CD4-positive, alpha-beta memory T cell (primary cell): ENCODE measurements at regions of chr7 and their contacts with region 1.

Region 1: GRCh38 chr7:101287032-101287431 is 34.6 kb downstream of the IFT22 start:
- DNase-seq: no peak
- H3K4me3 ChIP-seq: no peak overlapping the region
- H3K4me3 Mint-ChIP-seq: no peak overlapping the region
- H3K27ac ChIP-seq: no peak overlapping the region
- H3K27ac Mint-ChIP-seq: peak overlapping the region in 1 of 7 donors; percentile 83
- H3K4me1 ChIP-seq: peaks cover 9% of the 10 kb centered on the region
- H3K4me1 Mint-ChIP-seq: peaks cover 8 to 25% (median 19%) of the 10 kb centered on the region in 4 donors
- H3K27me3 ChIP-seq: no peaks in the 10 kb centered on the region
- H3K27me3 Mint-ChIP-seq: peaks cover 6 to 9% of the 10 kb centered on the region in 2 donors

Region 2: GRCh38 chr7:101162551-101163278 is 124.3 kb before region 1 on chr7:
- CTCF ChIA-PET with region 1: no interaction called
- POLR2A ChIA-PET with region 1: no interaction called
- intact Hi-C with region 1: no loop called
- DNase-seq: no peak
- H3K4me3 ChIP-seq: no peak overlapping the region
- H3K4me3 Mint-ChIP-seq: peak overlapping the region; percentile 46 to 79 (median 63)
- H3K27ac ChIP-seq: no peak overlapping the region
- H3K27ac Mint-ChIP-seq: no peak overlapping the region
- H3K4me1 ChIP-seq: peaks cover 39% of the 10 kb centered on the region
- H3K4me1 Mint-ChIP-seq: peaks cover 11 to 29% (median 19%) of the 10 kb centered on the region in 4 donors
- H3K27me3 ChIP-seq: peaks cover 36% of the 10 kb centered on the region
- H3K27me3 Mint-ChIP-seq: peaks cover 27 to 28% of the 10 kb centered on the region in 2 donors

Region 3: DNA sequence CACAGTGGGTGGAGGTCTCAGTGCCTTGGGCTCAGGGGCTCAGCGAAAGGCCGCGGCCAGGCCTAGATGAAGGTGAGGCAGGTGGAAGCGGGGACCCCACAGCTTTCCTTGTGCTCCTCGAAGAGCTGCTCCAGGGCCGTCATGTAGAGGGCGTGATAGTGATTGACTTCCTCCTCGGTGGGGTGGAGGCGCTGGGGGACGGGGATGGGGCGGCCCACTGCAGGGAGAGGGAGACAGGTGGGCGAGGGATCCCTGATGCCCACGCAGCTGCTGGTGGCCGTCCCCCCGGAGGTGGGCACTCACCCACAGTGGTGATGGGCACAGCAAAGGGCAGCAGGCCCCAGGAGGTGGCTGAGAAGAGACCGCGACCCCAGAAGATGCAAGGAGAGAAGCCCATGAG is 91.1 kb before region 1 on chr7:
- CTCF ChIA-PET with region 1: interaction called, 62 read pairs
- POLR2A ChIA-PET with region 1: no interaction called
- intact Hi-C with region 1: loop called (anchors 1 kb)
- DNase-seq: no peak
- H3K4me3 ChIP-seq: no peak overlapping the region
- H3K4me3 Mint-ChIP-seq: no peak overlapping the region
- H3K27ac ChIP-seq: no peak overlapping the region
- H3K27ac Mint-ChIP-seq: no peak overlapping the region
- H3K4me1 ChIP-seq: peaks cover 2% of the 10 kb centered on the region
- H3K4me1 Mint-ChIP-seq: peaks cover under 1 to 8% (median 4%) of the 10 kb centered on the region in 4 donors
- H3K27me3 ChIP-seq: no peaks in the 10 kb centered on the region
- H3K27me3 Mint-ChIP-seq: peaks cover 7 to 14% of the 10 kb centered on the region in 2 donors

Region 4: GRCh38 chr7:101244375-101245146 is 42.5 kb before region 1 on chr7 and contains the start of gene FIS1:
- CTCF ChIA-PET with region 1: interaction called, 24 read pairs
- POLR2A ChIA-PET with region 1: interaction called, 6 read pairs
- intact Hi-C with region 1: loop called (anchors 2 kb)
- DNase-seq: peak; percentile 91 to 96 (median 93)
- H3K4me3 ChIP-seq: peak within 1 kb of the TSS; percentile 95 to 100
- H3K4me3 Mint-ChIP-seq: peak within 1 kb of the TSS; percentile 93 to 99 (median 97)
- H3K27ac ChIP-seq: peak within 1 kb of the TSS; percentile 85
- H3K27ac Mint-ChIP-seq: peak within 1 kb of the TSS; percentile 93 to 99 (median 97)
- H3K4me1 ChIP-seq: peaks cover 24% of the 10 kb centered on the region
- H3K4me1 Mint-ChIP-seq: peaks cover 14 to 50% (median 24%) of the 10 kb centered on the region in 4 donors
- H3K27me3 ChIP-seq: no peaks in the 10 kb centered on the region
- H3K27me3 Mint-ChIP-seq: no peaks in the 10 kb centered on the region
- total RNA-seq, gene FIS1: 100 to 104 TPM

Region 5: GRCh38 chr7:101308245-101309085 is 21.4 kb after region 1 on chr7:
- CTCF ChIA-PET with region 1: interaction called, 10 read pairs
- POLR2A ChIA-PET with region 1: no interaction called
- intact Hi-C with region 1: no loop called
- DNase-seq: peak in 2 of 5 donors; percentile 9 to 10
- H3K4me3 ChIP-seq: peak overlapping the region; percentile 6 to 19
- H3K4me3 Mint-ChIP-seq: peak overlapping the region; percentile 80 to 91 (median 85)
- H3K27ac ChIP-seq: no peak overlapping the region
- H3K27ac Mint-ChIP-seq: peak overlapping the region in 2 of 7 donors; percentile 46 to 52
- H3K4me1 ChIP-seq: no peaks in the 10 kb centered on the region
- H3K4me1 Mint-ChIP-seq: peaks cover 3 to 9% (median 5%) of the 10 kb centered on the region in 4 donors
- H3K27me3 ChIP-seq: peaks cover 7% of the 10 kb centered on the region
- H3K27me3 Mint-ChIP-seq: peaks cover 30 to 36% of the 10 kb centered on the region in 2 donors

Region 6: GRCh38 chr7:101315336-101315735 is 28.3 kb after region 1 on chr7:
- CTCF ChIA-PET with region 1: interaction called, 11 read pairs
- POLR2A ChIA-PET with region 1: no interaction called
- intact Hi-C with region 1: no loop called
- DNase-seq: peak in 4 of 5 donors; percentile 31 to 39 (median 34)
- H3K4me3 ChIP-seq: no peak overlapping the region
- H3K4me3 Mint-ChIP-seq: no peak overlapping the region
- H3K27ac ChIP-seq: no peak overlapping the region
- H3K27ac Mint-ChIP-seq: no peak overlapping the region
- H3K4me1 ChIP-seq: no peaks in the 10 kb centered on the region
- H3K4me1 Mint-ChIP-seq: peaks cover 0 to 4% (median 0%) of the 10 kb centered on the region in 4 donors
- H3K27me3 ChIP-seq: no peaks in the 10 kb centered on the region
- H3K27me3 Mint-ChIP-seq: peaks cover 4 to 6% of the 10 kb centered on the region in 2 donors